ENCODE measurements at regions of chr22 and their contacts with region 1.

Region 1: GRCh38 chr22:37643225-37643847 is 3.9 kb downstream of the SH3BP1 start:
- DNase-seq: peak; percentile 92
- ATAC-seq: peak; percentile 84

Region 2: GRCh38 chr22:37386441-37386840 is 256.9 kb before region 1 on chr22:
- intact Hi-C with region 1: no loop called
- DNase-seq: no peak
- ATAC-seq: no peak

Region 3: DNA sequence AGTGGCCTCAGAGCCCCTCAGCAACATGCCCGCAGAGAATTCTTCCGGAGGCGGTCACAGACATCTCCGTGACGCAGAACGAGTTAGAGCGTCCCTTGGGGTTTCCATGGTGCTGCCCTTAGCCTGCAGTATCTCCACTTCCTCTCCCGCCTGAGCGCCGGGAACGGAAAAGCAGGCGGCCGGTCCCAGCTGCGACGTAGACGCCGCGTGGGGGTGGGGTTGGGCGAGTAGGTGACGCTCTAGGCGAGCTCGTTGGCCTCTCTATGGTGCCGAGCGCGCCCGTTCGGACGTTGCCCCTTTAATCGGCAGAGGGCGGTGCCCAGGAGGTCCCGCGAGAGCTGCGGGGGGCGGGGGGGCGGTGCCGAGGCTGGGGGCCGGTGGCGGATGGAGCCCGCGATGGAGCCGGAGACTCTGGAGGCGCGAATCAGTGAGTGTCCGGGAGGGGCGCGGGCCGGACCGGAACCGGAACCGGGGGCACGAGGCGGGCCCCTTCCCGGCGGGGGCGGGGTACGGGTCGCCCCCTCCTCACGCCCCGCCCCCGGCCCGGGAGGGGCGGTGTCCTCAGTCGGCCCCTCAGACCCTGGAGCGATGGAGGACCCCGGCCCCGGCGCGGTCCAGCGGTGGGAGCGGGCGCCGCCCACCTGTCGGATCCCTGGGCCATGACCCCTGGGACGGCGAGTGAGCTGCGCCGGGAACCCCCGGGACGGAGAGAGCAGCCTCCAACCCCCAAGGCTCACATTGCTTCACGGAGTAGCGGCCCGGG is 34.7 kb before region 1 on chr22 and contains the start of gene GGA1:
- intact Hi-C with region 1: no loop called
- DNase-seq: peak; percentile 97
- ATAC-seq: peak; percentile 93
- total RNA-seq, gene GGA1: 22.3 TPM

Region 4: GRCh38 chr22:37686002-37686982 is 43.0 kb after region 1 on chr22 and contains the start of gene NOL12:
- intact Hi-C with region 1: no loop called
- DNase-seq: peak; percentile 87
- ATAC-seq: peak; percentile 96
- total RNA-seq, gene NOL12: 14.3 TPM

Region 5: GRCh38 chr22:37792494-37792893 is 149.2 kb after region 1 on chr22:
- intact Hi-C with region 1: loop called (anchors 5 kb)
- DNase-seq: no peak
- ATAC-seq: no peak

Measured in Right ventricle myocardium superior (tissue), 1 donor.